GM12878 (cell line): ENCODE measurements at regions of chr12 and their contacts with region 1.

Region 1: DNA sequence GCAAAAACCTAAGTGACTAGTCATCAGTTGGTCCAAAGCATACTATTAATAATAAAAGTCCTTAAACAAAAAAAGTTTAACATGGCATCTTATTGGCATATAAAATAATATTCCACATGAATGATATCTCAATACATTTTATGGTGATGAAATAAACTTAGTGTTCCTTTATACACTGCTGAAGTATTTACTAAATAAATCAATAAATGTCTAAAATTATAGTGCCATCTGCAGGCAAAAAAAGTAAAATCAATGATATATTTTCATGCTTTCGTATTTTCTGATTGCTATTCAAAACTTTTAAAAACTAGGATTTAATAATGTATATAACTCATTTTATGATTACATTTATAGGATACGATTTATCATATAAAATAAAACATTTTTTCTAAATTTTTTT is 30.5 kb downstream of the PUS7L start:
- DNase-seq: no peak
- ATAC-seq: no peak
- H3K4me3 ChIP-seq: no peak overlapping the region
- H3K27ac ChIP-seq: no peak overlapping the region
- H3K4me1 ChIP-seq: no peaks in the 10 kb centered on the region
- H3K27me3 ChIP-seq: no peaks in the 10 kb centered on the region
- CTCF ChIP-seq: no peak; a peak in 1 of 6 replicates
- EP300 ChIP-seq: no peak
- POLR2A ChIP-seq: no peak
- RAD21 ChIP-seq: no peak

Region 2: GRCh38 chr12:43501703-43502102 is 226.4 kb before region 1 on chr12:
- CTCF ChIA-PET with region 1: no interaction called
- POLR2A ChIA-PET with region 1: no interaction called
- RAD21 ChIA-PET with region 1: no interaction called
- SMC1A ChIA-PET with region 1: no interaction called
- in situ Hi-C with region 1: no loop called
- intact Hi-C with region 1: loop called (anchors 10 kb)
- DNase-seq: no peak
- ATAC-seq: no peak
- H3K4me3 ChIP-seq: no peak overlapping the region
- H3K27ac ChIP-seq: no peak overlapping the region
- H3K4me1 ChIP-seq: no peaks in the 10 kb centered on the region
- H3K27me3 ChIP-seq: no peaks in the 10 kb centered on the region
- CTCF ChIP-seq: peak; percentile 4 to 44 (median 23); a peak in 2 of 6 replicates
- EP300 ChIP-seq: no peak
- POLR2A ChIP-seq: no peak
- RAD21 ChIP-seq: peak; percentile 55

Region 3: GRCh38 chr12:44088647-44089046 is 360.5 kb after region 1 on chr12:
- CTCF ChIA-PET with region 1: no interaction called
- POLR2A ChIA-PET with region 1: no interaction called
- RAD21 ChIA-PET with region 1: no interaction called
- SMC1A ChIA-PET with region 1: no interaction called
- in situ Hi-C with region 1: no loop called
- intact Hi-C with region 1: no loop called
- DNase-seq: no peak
- ATAC-seq: no peak
- H3K4me3 ChIP-seq: no peak overlapping the region
- H3K27ac ChIP-seq: no peak overlapping the region
- H3K4me1 ChIP-seq: no peaks in the 10 kb centered on the region
- H3K27me3 ChIP-seq: no peaks in the 10 kb centered on the region
- CTCF ChIP-seq: no peak
- EP300 ChIP-seq: no peak
- POLR2A ChIP-seq: no peak
- RAD21 ChIP-seq: no peak